H1 (cell line): ENCODE measurements at regions of chr3 and their contacts with region 1.

Region 1: GRCh38 chr3:110971010-110971585 is 100.5 kb upstream of the NECTIN3 start:
- DNase-seq: no peak
- H3K4me3 ChIP-seq: peak overlapping the region; percentile 3 to 75 (median 41); a peak in 4 of 8 replicates
- H3K27ac ChIP-seq: 0 out of 2 replicates have a peak overlapping the region, but pooled peaks have one; percentile 35
- H3K4me1 ChIP-seq: no peaks in the 10 kb centered on the region
- H3K27me3 ChIP-seq: no peaks in the 10 kb centered on the region
- CTCF ChIP-seq: no peak
- EP300 ChIP-seq: no peak
- POLR2A ChIP-seq: peak; percentile 85 to 95
- RAD21 ChIP-seq: no peak

Region 2: GRCh38 chr3:110925798-110926197 is 45.3 kb before region 1 on chr3:
- CTCF ChIA-PET with region 1: no interaction called
- POLR2A ChIA-PET with region 1: interaction called, 14 read pairs
- DNase-seq: no peak
- H3K4me3 ChIP-seq: no peak overlapping the region
- H3K27ac ChIP-seq: no peak overlapping the region
- H3K4me1 ChIP-seq: no peaks in the 10 kb centered on the region; a peak in 1 of 7 replicates
- H3K27me3 ChIP-seq: no peaks in the 10 kb centered on the region
- CTCF ChIP-seq: no peak
- EP300 ChIP-seq: no peak
- POLR2A ChIP-seq: no peak; a peak in 1 of 3 replicates
- RAD21 ChIP-seq: no peak

Region 3: DNA sequence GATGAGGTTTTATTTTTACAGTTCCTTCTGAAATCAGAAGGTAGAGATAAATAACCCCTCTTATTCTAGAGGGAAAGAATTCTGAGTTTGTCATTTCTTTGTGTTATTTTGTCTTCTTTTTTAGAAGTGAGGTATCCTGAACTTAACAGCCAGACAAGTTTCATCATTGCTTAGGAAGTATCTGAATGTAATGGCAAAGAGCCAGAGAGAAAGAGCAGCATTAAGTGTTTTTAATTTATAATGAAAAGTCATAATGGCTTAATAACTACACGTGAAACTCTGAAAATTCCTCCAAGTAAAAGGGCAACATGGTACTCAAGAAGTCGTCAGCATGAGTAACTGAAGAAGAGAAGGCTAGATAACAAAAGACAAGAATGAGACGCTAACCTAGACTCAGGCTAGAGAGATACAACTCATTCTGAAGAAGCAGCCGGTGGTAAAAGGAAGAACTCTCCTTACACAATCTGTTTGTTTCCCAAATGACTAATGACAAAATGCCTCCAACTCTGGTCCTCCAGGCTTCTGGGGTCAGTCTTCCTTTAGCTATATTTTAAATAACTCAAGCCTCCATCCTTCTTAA is 15.7 kb before region 1 on chr3:
- CTCF ChIA-PET with region 1: interaction called, 3 read pairs
- POLR2A ChIA-PET with region 1: interaction called, 135 read pairs
- DNase-seq: no peak
- H3K4me3 ChIP-seq: no peak overlapping the region
- H3K27ac ChIP-seq: no peak overlapping the region
- H3K4me1 ChIP-seq: peaks cover 0 to 2% (median 0%) of the 10 kb centered on the region in 4 experiments; a peak in 1 of 7 replicates
- H3K27me3 ChIP-seq: no peaks in the 10 kb centered on the region
- CTCF ChIP-seq: no peak
- EP300 ChIP-seq: no peak
- POLR2A ChIP-seq: peak in 1 of 2 experiments; percentile 46; a peak in 1 of 3 replicates
- RAD21 ChIP-seq: no peak

Region 4: GRCh38 chr3:110995461-110996231 is 24.5 kb after region 1 on chr3:
- CTCF ChIA-PET with region 1: no interaction called
- POLR2A ChIA-PET with region 1: interaction called, 13 read pairs
- DNase-seq: no peak
- H3K4me3 ChIP-seq: no peak overlapping the region
- H3K27ac ChIP-seq: no peak overlapping the region
- H3K4me1 ChIP-seq: no peaks in the 10 kb centered on the region
- H3K27me3 ChIP-seq: no peaks in the 10 kb centered on the region
- CTCF ChIP-seq: no peak
- EP300 ChIP-seq: no peak
- POLR2A ChIP-seq: no peak
- RAD21 ChIP-seq: no peak

Region 5: DNA sequence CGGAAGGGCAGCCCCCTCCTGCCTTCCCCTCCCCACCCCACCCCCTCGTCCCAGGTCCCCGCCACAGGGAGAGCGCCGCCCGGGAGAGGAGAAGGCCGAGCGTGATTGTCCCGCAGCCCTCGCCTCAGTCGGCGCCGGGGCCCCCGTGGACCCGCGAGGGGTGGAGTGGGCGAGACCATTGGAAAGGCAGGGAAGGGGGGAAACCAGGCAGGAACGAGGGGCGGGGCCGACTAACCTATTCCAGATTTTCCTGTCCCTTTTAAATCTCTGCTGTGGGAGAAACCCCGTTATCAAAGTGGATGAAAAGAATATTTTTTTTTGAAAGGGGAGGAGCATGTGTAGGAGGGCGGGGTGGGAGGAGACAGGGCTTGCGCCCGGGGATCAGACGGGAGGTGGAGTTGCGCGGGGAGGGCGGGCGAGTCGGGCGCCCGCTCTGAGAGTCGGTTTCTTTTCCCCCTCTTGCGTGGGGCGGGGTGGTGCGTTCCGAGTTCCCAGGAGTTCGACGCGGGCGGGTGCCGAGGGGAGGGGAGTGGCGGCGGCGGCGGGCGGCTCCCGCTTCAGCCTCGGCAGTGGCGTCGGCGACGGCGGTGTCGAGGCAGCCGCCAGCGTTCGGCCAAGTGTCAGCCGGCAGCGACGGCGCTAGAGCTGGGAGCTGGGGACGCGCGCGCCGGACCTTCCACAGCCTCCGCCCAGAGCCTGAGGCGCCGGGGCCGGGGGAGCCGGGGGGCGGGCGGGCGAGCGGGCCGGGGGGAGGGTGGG is 100.3 kb after region 1 on chr3 and contains the start of gene NECTIN3:
- CTCF ChIA-PET with region 1: interaction called, 4 read pairs
- POLR2A ChIA-PET with region 1: interaction called, 15 read pairs
- DNase-seq: peak in 1 of 2 experiments; percentile 89
- H3K4me3 ChIP-seq: peak within 1 kb of the TSS; percentile 80 to 99 (median 94)
- H3K27ac ChIP-seq: peak within 1 kb of the TSS; percentile 75
- H3K4me1 ChIP-seq: peaks cover 0 to 5% (median under 1%) of the 10 kb centered on the region in 4 experiments; a peak in 4 of 7 replicates
- H3K27me3 ChIP-seq: no peaks in the 10 kb centered on the region
- CTCF ChIP-seq: no peak
- EP300 ChIP-seq: peak in 1 of 2 experiments; percentile 77; a peak in 1 of 3 replicates
- POLR2A ChIP-seq: peak; percentile 44 to 48; a peak in 2 of 3 replicates
- RAD21 ChIP-seq: no peak
- total RNA-seq, gene NECTIN3: 50.6 and 52.2 TPM in 2 replicates